Heart left ventricle (tissue), 16 donors: ENCODE measurements at regions of chr3 and their contacts with region 1.

Region 1: GRCh38 chr3:24237971-24238767 is 256.5 kb downstream of the THRB start:
- DNase-seq: peak in 2 of 5 donors; percentile 39 to 46
- ATAC-seq: peak; percentile 29 to 85 (median 74)
- H3K4me3 ChIP-seq: no peak overlapping the region
- H3K27ac ChIP-seq: peak overlapping the region in 4 of 12 donors; percentile 19 to 70 (median 38)
- H3K4me1 ChIP-seq: peaks cover 0 to 38% (median 13%) of the 10 kb centered on the region in 12 donors
- H3K27me3 ChIP-seq: no peaks in the 10 kb centered on the region
- CTCF ChIP-seq: peak in 11 of 12 donors; percentile 40 to 68 (median 55)
- POLR2A ChIP-seq: no peak

Region 2: DNA sequence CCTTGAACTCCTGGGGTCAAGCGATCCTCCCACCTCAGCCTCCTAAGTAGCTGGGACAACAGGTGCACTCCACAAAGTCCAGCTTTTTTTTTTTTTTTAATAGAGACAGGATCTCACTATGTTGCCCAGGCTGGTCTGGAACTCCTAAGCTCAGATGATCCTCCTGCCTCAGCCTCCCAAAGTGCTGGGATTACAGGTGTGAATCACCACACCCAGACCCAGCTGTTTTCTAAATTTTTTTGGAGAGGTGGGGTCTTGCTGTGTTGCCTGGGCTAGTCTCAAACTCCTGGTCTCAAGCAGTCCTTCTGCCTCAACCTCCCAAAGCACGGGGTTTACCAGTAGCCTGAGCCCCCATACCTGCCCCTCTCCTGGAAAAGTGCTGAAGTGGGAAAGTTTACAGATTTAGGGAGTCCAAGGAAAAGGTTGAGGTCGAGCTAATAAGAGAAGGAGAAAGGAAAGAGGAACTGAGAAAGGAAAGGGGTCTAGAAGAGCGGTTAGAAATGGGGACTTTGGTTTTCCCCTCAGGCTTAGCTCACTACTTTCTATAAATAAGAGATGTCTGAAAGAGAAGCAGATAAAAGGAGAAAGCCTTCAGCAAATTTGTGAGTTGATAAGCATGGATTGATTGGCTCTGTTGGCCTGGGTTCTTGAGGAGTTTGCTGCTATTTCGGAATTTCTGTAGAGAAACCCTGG is 408.8 kb before region 1 on chr3:
- intact Hi-C with region 1: no loop called
- DNase-seq: no peak
- ATAC-seq: no peak
- H3K4me3 ChIP-seq: no peak overlapping the region
- H3K27ac ChIP-seq: no peak overlapping the region
- H3K4me1 ChIP-seq: peaks cover 0 to 50% (median 28%) of the 10 kb centered on the region in 12 donors
- H3K27me3 ChIP-seq: no peaks in the 10 kb centered on the region
- CTCF ChIP-seq: no peak
- POLR2A ChIP-seq: no peak

Region 3: GRCh38 chr3:23888617-23889228 is 349.4 kb before region 1 on chr3:
- intact Hi-C with region 1: loop called in 6 of 10 experiments (anchors 5 to 10 kb)
- DNase-seq: no peak
- ATAC-seq: peak in 1 of 4 donors; percentile 27
- H3K4me3 ChIP-seq: no peak overlapping the region
- H3K27ac ChIP-seq: no peak overlapping the region
- H3K4me1 ChIP-seq: peaks cover 0 to 22% (median 8%) of the 10 kb centered on the region in 12 donors
- H3K27me3 ChIP-seq: no peaks in the 10 kb centered on the region
- CTCF ChIP-seq: peak; percentile 71 to 93 (median 80)
- POLR2A ChIP-seq: no peak

Region 4: DNA sequence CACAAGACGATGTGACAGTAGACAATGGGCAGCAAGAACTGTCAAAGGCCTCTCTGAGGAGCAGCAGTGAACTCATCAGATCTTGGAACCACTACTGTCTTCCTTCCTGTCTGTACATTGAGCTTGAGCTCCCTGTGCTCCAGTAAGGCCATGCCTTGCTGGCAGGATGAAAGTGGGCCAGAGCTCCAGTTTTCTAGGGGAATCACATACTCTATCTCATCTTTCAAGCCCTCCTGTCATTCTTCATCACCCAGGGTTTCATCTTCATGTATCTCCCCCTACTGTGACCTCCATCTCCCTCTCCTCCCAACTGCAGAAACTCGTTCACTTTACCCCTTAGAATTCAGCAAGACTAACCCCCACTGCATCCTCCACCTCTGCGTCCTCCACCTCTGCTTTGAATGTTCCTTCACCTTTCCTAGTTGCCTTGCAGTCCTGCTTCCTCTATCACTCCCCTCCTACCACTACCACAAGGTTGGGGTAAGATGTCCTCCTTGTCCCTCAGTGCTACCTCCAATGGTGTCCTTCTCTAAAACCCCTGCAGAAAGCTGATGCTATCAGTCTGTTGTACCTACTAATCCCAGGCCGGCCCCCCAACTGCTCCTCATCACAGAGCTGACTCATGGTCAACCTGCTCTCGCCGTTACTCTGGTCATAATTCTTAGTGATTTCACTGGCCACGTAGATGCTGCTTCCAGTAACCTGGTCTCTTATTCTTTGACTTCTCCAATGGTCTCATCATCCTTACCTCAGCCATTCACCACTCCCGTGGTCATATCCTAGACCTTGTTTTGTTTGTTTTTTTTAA is 343.7 kb before region 1 on chr3:
- intact Hi-C with region 1: loop called in 6 of 10 experiments (anchors 5 to 10 kb)
- DNase-seq: no peak
- ATAC-seq: peak in 1 of 4 donors; percentile 30
- H3K4me3 ChIP-seq: no peak overlapping the region
- H3K27ac ChIP-seq: no peak overlapping the region
- H3K4me1 ChIP-seq: peaks cover 0 to 5% (median 0%) of the 10 kb centered on the region in 12 donors
- H3K27me3 ChIP-seq: no peaks in the 10 kb centered on the region
- CTCF ChIP-seq: no peak
- POLR2A ChIP-seq: no peak

Region 5: GRCh38 chr3:23999012-23999641 is 239.0 kb before region 1 on chr3:
- intact Hi-C with region 1: loop called (anchors 1 to 5 kb)
- DNase-seq: peak; percentile 48 to 77 (median 63)
- ATAC-seq: peak in 1 of 4 donors; percentile 30
- H3K4me3 ChIP-seq: no peak overlapping the region
- H3K27ac ChIP-seq: no peak overlapping the region
- H3K4me1 ChIP-seq: peaks cover 0 to 16% (median 7%) of the 10 kb centered on the region in 12 donors
- H3K27me3 ChIP-seq: no peaks in the 10 kb centered on the region
- CTCF ChIP-seq: peak; percentile 64 to 95 (median 88)
- POLR2A ChIP-seq: no peak

Region 6: DNA sequence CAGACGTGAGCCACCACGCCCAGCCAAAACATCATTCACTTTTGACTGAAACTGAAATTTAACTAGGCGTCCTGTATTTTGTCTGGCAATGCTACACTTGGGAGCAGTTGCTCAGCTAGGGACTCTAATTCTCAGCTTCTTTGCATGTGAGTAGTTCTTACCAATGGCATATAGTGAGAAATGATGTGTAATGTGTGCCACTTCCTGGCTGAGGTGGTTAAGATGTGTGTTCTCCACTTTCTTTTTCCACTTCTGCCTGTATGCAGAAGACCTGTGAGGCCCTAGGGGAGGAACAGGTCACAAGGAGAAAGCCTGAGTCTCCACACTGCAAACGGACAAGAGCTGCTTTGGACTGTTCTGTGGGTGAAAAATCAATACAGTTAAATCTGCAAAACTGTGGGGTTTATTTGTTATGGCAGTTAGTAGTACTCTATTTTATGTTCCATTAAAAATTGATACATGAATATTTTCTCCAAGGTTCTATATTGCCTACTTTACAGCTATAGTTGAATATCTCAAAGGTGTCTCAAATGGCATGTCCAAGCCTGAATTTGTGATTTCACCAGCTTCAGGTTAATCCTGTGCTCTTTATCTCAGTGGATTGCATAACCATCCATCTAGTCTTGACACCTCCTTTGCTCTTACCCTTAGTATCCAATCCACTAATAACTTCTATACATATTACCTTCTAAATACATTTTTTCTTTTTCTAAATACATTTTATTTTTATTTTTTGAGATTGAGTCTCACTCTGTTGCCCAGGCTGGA is 233.8 kb before region 1 on chr3:
- intact Hi-C with region 1: loop called in 9 of 10 experiments (anchors 1 to 5 kb)
- DNase-seq: no peak
- ATAC-seq: no peak
- H3K4me3 ChIP-seq: no peak overlapping the region
- H3K27ac ChIP-seq: no peak overlapping the region
- H3K4me1 ChIP-seq: peaks cover 0 to 3% (median 0%) of the 10 kb centered on the region in 12 donors
- H3K27me3 ChIP-seq: no peaks in the 10 kb centered on the region
- CTCF ChIP-seq: no peak
- POLR2A ChIP-seq: no peak

Region 7: GRCh38 chr3:24069045-24069444 is 169.1 kb before region 1 on chr3:
- intact Hi-C with region 1: loop called in 5 of 10 experiments (anchors 2 to 10 kb)
- DNase-seq: peak in 1 of 5 donors; percentile 31
- ATAC-seq: peak in 1 of 4 donors; percentile 42
- H3K4me3 ChIP-seq: no peak overlapping the region
- H3K27ac ChIP-seq: no peak overlapping the region
- H3K4me1 ChIP-seq: no peaks in the 10 kb centered on the region
- H3K27me3 ChIP-seq: no peaks in the 10 kb centered on the region
- CTCF ChIP-seq: peak in 10 of 12 donors; percentile 22 to 50 (median 40)
- POLR2A ChIP-seq: no peak

Region 8: GRCh38 chr3:24174614-24175013 is 63.6 kb before region 1 on chr3:
- intact Hi-C with region 1: no loop called
- DNase-seq: no peak
- ATAC-seq: no peak
- H3K4me3 ChIP-seq: no peak overlapping the region
- H3K27ac ChIP-seq: no peak overlapping the region
- H3K4me1 ChIP-seq: peaks cover 0 to 4% (median 0%) of the 10 kb centered on the region in 12 donors
- H3K27me3 ChIP-seq: no peaks in the 10 kb centered on the region
- CTCF ChIP-seq: no peak
- POLR2A ChIP-seq: no peak

Region 9: DNA sequence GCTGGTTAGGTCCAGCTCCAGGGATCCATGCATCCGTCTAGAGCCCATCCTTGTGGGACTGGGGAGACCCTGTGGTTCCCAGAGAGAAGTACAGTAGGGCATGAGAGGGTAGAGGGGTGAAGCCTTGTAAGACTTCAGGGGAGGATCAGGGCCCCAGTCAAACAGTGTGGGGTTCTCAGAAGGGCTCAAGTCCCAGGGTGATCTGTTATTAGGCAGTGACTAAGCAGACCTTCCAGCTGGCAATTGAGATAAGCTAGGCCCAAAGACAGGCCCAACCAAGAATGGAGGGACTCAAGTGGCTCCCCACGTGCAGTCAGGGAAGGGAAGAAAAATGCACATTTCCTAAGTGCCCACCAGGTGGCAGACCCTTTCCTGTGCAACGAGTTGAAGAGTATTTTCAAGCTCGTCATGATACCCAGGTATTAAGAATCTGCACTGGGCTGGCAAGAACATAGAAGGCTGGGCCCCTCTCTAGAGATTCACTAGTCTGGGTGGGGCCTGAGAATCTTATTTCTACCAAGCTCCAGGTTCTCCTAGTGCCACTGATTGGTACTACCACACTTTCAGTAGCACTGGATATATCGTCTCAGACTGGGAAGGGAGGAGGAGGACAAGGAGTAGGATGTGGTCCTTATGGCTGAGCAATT is 52.3 kb before region 1 on chr3:
- intact Hi-C with region 1: loop called in 5 of 10 experiments (anchors 2 to 5 kb)
- DNase-seq: peak in 4 of 5 donors; percentile 21 to 57 (median 38)
- ATAC-seq: peak; percentile 44 to 88 (median 84)
- H3K4me3 ChIP-seq: no peak overlapping the region
- H3K27ac ChIP-seq: peak overlapping the region in 2 of 12 donors; percentile 21 to 39
- H3K4me1 ChIP-seq: peaks cover 0 to 17% (median 4%) of the 10 kb centered on the region in 12 donors
- H3K27me3 ChIP-seq: no peaks in the 10 kb centered on the region
- CTCF ChIP-seq: peak; percentile 40 to 71 (median 52)
- POLR2A ChIP-seq: no peak